ENCODE measurements at regions of chr3 and their contacts with region 1.

Region 1: GRCh38 chr3:66971891-66972551 is 26.1 kb upstream of the KBTBD8 start:
- DNase-seq: peak; percentile 79
- ATAC-seq: peak; percentile 95
- H3K4me3 Mint-ChIP-seq: peak overlapping the region; percentile 68
- H3K27ac Mint-ChIP-seq: peak overlapping the region; percentile 69
- H3K4me1 Mint-ChIP-seq: peaks cover 16% of the 10 kb centered on the region
- H3K27me3 Mint-ChIP-seq: peaks cover 5% of the 10 kb centered on the region
- CTCF ChIP-seq: peak; percentile 90

Region 2: DNA sequence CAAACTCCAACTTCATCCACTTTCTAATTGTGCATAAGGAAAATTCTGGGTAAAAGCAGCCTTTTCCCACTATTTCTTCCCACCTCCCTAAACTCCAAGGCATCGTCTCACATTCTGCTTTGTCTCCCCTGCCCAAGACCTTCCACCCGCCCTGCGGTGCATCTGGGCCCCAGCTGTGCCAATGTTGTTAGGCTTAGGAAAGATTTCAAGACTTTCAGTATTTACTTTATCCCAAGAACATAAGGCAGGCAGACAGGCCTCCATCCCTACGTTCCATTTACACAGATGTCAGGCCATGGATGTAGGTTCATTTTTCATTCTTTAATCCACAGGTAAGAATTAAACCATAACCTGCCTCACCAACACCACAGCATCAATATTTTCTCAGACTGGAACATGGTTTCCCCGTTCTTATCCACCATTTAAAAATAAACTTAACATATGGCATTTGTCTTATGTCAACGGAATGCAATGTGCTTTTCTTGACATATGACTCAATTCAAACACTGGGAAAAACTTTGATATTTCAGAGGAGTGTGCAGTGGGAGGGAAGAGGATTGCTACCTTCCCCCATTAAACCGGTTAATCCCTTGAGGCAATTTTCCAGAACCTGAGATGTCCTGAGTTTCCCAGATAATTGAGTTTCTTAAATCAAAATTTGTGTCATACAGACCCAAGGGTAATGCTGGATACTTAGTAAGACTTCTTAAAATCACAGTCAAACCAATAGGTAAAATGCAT is 233.2 kb before region 1 on chr3:
- CTCF ChIA-PET with region 1: no interaction called
- POLR2A ChIA-PET with region 1: no interaction called
- intact Hi-C with region 1: no loop called
- DNase-seq: no peak
- ATAC-seq: no peak
- H3K4me3 Mint-ChIP-seq: no peak overlapping the region
- H3K27ac Mint-ChIP-seq: no peak overlapping the region
- H3K4me1 Mint-ChIP-seq: no peaks in the 10 kb centered on the region
- H3K27me3 Mint-ChIP-seq: peaks cover 2% of the 10 kb centered on the region
- CTCF ChIP-seq: no peak

Region 3: GRCh38 chr3:66938338-66938963 is 33.6 kb before region 1 on chr3:
- CTCF ChIA-PET with region 1: interaction called, 10 read pairs
- POLR2A ChIA-PET with region 1: no interaction called
- intact Hi-C with region 1: no loop called
- DNase-seq: peak; percentile 33
- ATAC-seq: peak; percentile 39
- H3K4me3 Mint-ChIP-seq: no peak overlapping the region
- H3K27ac Mint-ChIP-seq: no peak overlapping the region
- H3K4me1 Mint-ChIP-seq: no peaks in the 10 kb centered on the region
- H3K27me3 Mint-ChIP-seq: peaks cover 27% of the 10 kb centered on the region
- CTCF ChIP-seq: peak; percentile 67

Region 4: GRCh38 chr3:66957367-66957766 is 14.7 kb before region 1 on chr3:
- CTCF ChIA-PET with region 1: interaction called, 18 read pairs
- POLR2A ChIA-PET with region 1: interaction called, 3 read pairs
- intact Hi-C with region 1: no loop called
- DNase-seq: no peak
- ATAC-seq: no peak
- H3K4me3 Mint-ChIP-seq: no peak overlapping the region
- H3K27ac Mint-ChIP-seq: no peak overlapping the region
- H3K4me1 Mint-ChIP-seq: no peaks in the 10 kb centered on the region
- H3K27me3 Mint-ChIP-seq: peaks cover 7% of the 10 kb centered on the region
- CTCF ChIP-seq: no peak

Region 5: GRCh38 chr3:66989860-66990665 is 18.0 kb after region 1 on chr3:
- CTCF ChIA-PET with region 1: interaction called, 38 read pairs
- POLR2A ChIA-PET with region 1: no interaction called
- intact Hi-C with region 1: no loop called
- DNase-seq: peak; percentile 10
- ATAC-seq: peak; percentile 53
- H3K4me3 Mint-ChIP-seq: no peak overlapping the region
- H3K27ac Mint-ChIP-seq: no peak overlapping the region
- H3K4me1 Mint-ChIP-seq: no peaks in the 10 kb centered on the region
- H3K27me3 Mint-ChIP-seq: peaks cover 8% of the 10 kb centered on the region
- CTCF ChIP-seq: no peak

Region 6: DNA sequence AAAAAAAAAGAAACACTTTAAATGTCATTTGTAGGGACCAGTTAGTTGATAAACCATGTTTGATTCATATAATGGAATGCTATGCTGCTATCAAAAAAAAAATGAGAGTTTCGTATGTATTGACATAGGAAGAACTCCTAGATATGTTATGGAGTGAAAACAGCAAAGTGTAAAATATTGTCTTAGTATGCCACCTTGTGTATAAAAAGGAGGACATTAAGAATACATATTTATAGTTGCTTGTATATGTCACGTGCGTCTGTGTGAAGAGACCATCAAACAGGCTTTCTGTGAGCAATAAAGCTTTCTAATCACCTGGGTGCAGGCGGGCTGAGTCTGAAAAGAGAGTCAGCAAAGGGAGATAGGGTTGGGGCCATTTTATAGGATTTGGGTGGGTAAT is 65.6 kb after region 1 on chr3:
- CTCF ChIA-PET with region 1: interaction called, 40 read pairs
- POLR2A ChIA-PET with region 1: no interaction called
- intact Hi-C with region 1: loop called (anchors 5 kb)
- DNase-seq: no peak
- ATAC-seq: no peak
- H3K4me3 Mint-ChIP-seq: no peak overlapping the region
- H3K27ac Mint-ChIP-seq: no peak overlapping the region
- H3K4me1 Mint-ChIP-seq: no peaks in the 10 kb centered on the region
- H3K27me3 Mint-ChIP-seq: no peaks in the 10 kb centered on the region
- CTCF ChIP-seq: no peak

Region 7: DNA sequence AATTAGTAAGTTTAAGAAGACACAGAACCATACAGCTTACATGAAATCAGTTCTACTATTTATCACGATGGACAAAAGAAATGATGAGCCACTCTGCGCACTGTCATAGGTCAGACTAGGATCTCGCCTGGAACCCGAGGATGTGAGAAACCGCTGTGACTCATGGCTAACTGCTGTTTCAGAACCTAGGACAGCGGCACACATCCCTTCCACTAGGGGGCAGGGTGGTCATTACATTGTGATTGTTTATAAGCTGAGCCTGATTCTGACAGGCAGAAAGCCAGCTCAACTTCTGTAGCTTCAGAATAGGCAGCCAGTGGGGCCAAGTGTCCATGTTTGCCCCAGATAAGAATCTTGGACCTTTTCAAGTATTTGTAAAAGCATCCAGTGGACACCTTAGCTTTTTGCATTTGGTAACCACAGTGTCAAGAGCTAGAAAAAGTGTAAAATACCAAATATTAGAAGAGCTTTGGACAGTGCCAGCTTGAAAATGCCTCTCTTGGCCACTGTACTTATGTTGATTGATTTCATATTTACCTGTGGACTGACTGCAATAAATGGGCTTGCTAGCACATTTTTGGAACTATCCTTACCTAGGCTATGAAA is 141.9 kb after region 1 on chr3:
- CTCF ChIA-PET with region 1: interaction called, 29 read pairs
- POLR2A ChIA-PET with region 1: no interaction called
- intact Hi-C with region 1: loop called (anchors 2 kb)
- DNase-seq: peak; percentile 93
- ATAC-seq: peak; percentile 100
- H3K4me3 Mint-ChIP-seq: no peak overlapping the region
- H3K27ac Mint-ChIP-seq: no peak overlapping the region
- H3K4me1 Mint-ChIP-seq: peaks cover 4% of the 10 kb centered on the region
- H3K27me3 Mint-ChIP-seq: peaks cover 20% of the 10 kb centered on the region
- CTCF ChIP-seq: peak; percentile 77

Region 8: DNA sequence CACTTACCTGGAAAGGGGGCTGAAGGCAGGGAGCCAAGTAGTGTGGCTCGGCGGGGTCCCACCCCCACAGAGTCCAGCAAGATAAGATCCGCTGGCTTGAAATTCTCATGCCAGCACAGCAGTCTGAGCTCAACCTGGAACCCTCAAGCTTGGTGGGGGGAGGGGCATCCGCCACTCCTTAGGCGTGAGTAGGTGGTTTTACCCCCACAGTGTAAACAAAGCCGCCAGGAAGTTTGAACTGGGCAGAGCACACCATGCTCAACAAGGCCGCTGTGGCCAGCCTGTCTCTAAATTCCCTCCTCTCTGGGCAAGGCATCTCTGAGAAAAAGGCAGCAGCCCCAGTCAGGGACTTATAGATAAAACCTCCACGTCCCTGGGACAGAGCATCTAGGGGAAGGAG is 182.4 kb after region 1 on chr3:
- CTCF ChIA-PET with region 1: no interaction called
- POLR2A ChIA-PET with region 1: no interaction called
- intact Hi-C with region 1: no loop called
- DNase-seq: no peak
- ATAC-seq: no peak
- H3K4me3 Mint-ChIP-seq: no peak overlapping the region
- H3K27ac Mint-ChIP-seq: no peak overlapping the region
- H3K4me1 Mint-ChIP-seq: no peaks in the 10 kb centered on the region
- H3K27me3 Mint-ChIP-seq: no peaks in the 10 kb centered on the region
- CTCF ChIP-seq: no peak

Measured in activated CD8-positive, alpha-beta T cell treated with anti-CD3 and anti-CD28 coated beads for 36 hours (primary cell).